Common myeloid progenitor, CD34-positive (primary cell): ENCODE measurements at regions of chr19 and their contacts with region 1.

Region 1: DNA sequence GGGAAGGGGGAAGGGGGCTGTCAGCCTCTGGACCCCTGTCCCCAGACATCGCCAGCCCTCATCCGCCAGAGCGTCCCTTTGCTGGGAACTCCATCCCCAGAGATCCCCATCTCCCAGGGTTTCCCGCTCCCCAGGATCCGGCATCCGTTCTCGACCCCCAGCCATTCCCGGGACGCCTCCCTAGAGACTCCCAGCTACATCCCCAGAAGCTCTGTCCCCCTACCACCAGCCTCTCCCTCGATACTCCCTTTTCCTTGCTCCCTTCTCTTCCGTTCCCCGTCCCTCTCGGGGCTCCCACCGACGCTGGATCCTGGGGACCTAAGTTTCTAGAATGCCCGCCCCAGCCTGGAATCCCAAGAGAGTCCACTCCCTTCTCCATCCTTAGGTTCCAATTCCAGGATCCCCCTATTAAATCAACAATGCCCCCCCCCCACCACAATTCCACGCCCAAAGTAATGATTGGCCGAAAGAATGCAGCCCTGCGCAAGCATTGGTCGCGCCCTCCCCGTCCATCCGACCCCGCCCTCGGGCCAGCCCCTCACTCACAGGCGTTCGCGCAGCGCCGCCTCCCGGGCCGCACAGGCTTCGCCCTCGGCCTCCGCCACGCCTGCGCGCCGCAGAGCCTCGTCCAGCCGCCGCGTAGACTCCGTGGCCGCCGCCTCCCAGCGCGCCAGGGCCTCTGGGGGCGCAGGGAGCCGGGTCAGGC is 3.2 kb downstream of the CCDC194 start:
- DNase-seq: peak; percentile 92 to 94 (median 93)
- H3K4me3 ChIP-seq: peak overlapping the region; percentile 32 to 84 (median 70)
- H3K27ac ChIP-seq: no peak overlapping the region
- H3K4me1 ChIP-seq: peaks cover 4 to 47% (median 38%) of the 10 kb centered on the region in 4 experiments
- H3K27me3 ChIP-seq: peaks cover 0 to 5% (median 0%) of the 10 kb centered on the region in 5 experiments

Region 2: DNA sequence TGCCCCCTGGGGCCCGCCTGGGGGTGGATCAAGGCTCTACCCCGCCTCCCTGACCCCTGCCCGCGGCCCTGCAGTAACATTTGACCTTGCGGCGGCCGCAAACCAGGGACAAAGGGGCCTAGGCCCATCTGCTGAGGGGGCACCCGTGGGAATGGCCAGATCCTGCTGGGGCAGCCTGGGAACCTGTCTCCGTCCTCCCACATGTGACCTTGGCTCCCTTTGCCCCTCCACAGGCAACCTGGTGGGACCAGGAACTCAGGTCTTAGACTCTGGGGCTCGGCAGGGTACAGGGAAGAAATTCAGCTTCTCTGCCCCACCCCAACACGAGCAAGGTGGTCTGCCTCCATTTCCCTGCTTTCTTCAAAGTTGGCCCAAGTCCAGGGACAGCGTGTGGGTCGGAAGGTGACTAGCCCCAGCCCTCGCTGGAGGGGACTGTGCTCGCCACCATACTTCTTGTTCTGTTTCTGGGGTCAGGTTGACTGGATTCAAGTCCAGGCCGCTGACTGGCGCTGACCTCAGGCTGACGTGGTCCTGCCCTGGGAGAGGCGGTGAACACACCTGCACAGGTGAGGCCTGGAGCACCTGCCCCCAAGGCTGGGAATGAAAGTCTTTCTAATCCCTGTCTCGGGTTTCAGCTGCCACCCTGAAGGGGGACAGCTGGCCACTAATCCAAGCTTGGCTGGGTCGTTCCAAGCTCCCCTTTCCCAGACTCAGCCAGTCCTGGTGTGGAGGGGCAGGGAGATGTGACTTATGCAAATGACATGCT is 142.6 kb before region 1 on chr19:
- CTCF ChIA-PET with region 1: no interaction called
- POLR2A ChIA-PET with region 1: no interaction called
- DNase-seq: no peak
- H3K4me3 ChIP-seq: no peak overlapping the region
- H3K27ac ChIP-seq: no peak overlapping the region
- H3K4me1 ChIP-seq: peaks cover 0 to 25% (median 24%) of the 10 kb centered on the region in 4 experiments
- H3K27me3 ChIP-seq: no peaks in the 10 kb centered on the region

Region 3: DNA sequence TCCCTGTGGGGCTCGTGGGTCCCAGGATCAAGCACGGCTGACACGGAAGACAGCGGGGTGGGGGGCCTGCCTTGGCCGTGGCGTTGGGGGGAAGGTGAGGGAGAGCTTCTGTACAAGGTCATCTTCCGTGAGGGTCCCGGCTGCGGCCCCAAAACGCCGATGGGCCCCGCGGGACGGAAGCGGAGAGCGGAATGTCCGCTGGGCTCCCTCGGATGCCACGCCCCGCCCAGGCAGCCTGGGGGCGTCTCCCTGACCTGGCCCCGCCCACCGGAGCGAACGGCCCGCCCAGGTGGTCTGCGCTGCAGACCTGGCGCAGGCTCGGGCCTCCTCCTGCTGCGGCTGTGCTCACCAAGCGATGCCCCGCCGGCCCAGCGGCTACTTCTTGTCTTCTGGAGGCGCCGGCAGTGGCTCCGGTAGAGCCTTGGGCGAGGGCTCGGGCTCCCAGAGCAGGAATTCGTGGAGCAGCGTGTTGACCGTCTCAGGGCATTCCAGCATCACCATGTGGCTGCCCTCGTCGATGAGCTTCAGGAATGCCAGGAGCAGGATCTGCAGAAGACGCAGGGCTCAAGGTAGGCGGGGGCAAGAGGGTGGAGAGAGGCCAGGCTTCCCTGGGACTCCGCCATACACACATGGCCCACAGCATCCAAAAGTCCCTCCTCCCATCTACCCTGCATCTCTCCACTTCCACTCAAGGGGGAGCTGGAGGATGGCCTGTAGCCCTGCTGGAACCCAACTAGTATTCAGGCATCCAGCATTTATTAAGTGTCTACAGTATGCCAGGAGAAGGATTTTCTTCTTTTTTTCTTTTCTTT is 98.3 kb before region 1 on chr19:
- CTCF ChIA-PET with region 1: interaction called, 18 read pairs
- POLR2A ChIA-PET with region 1: no interaction called
- DNase-seq: peak; percentile 77 to 88 (median 86)
- H3K4me3 ChIP-seq: peak overlapping the region; percentile 58 to 86 (median 70)
- H3K27ac ChIP-seq: peak overlapping the region in 1 of 2 experiments; percentile 75
- H3K4me1 ChIP-seq: peaks cover 0 to 16% (median 8%) of the 10 kb centered on the region in 4 experiments
- H3K27me3 ChIP-seq: no peaks in the 10 kb centered on the region

Region 4: GRCh38 chr19:17334414-17335409 is 56.1 kb before region 1 on chr19 and contains the start of gene ANO8:
- CTCF ChIA-PET with region 1: interaction called, 11 read pairs
- POLR2A ChIA-PET with region 1: interaction called, 3 read pairs
- DNase-seq: peak; percentile 98 to 99 (median 99)
- H3K4me3 ChIP-seq: peak within 1 kb of the TSS; percentile 52 to 90 (median 80)
- H3K27ac ChIP-seq: peak within 1 kb of the TSS in 1 of 2 experiments; percentile 38
- H3K4me1 ChIP-seq: peaks cover 0 to 47% (median 42%) of the 10 kb centered on the region in 4 experiments
- H3K27me3 ChIP-seq: peaks cover 0 to 7% (median 0%) of the 10 kb centered on the region in 5 experiments

Region 5: DNA sequence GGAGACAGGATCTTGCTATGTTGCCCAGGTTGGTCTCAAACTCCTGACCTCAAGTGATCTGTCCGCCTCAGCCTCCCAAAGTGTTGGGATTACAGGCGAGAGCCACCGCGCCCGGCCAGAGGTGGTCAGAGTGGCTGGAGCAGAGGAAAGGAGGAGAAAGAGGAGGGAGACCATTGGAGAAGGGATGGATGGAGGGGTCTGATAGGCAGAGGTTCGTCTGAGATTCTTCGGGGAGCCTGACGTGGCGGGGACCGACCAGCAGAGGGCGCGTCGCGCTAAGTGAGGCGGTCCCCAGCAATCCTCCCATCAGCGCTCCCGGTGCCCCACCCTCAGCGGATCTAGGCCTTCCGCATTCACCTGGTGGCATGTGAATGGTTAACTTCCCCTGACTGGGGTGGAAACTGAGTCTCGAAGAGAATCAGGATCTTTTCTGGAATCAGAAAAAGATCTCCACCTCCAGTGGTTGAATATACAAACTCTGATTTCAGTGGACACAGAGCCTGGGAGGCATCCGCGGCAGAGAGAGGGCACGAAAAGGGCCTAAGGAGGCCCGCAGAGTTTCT is 44.6 kb before region 1 on chr19:
- CTCF ChIA-PET with region 1: interaction called, 144 read pairs
- POLR2A ChIA-PET with region 1: no interaction called
- DNase-seq: peak; percentile 60 to 69 (median 62)
- H3K4me3 ChIP-seq: no peak overlapping the region
- H3K27ac ChIP-seq: no peak overlapping the region
- H3K4me1 ChIP-seq: peaks cover 0 to 29% (median 21%) of the 10 kb centered on the region in 4 experiments
- H3K27me3 ChIP-seq: no peaks in the 10 kb centered on the region

Region 6: DNA sequence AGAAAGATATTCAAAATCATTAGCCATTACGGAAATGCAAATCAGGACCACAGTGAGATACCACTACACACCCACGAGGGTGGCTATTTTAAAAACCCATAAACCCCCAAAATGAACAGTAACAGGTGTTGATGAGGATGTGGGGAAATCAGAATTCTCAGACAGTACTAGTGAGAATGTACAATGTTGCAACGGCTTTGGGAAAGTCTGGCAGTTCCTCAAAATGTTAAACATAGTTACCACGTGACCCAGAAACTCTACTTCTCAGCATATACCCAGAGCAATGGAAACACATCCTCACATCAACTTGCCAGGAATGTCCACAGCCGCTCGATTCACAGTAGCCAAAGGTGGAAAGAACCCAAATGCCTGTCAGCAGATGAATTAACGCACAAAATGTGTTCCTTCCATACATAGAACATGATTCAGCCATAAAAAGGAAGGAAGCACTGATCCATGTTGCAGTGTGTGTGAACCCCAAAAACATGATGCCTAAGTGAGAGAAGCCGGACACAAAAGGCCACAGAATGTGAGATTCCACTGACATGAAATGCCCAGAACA is 20.7 kb before region 1 on chr19:
- CTCF ChIA-PET with region 1: interaction called, 16 read pairs
- POLR2A ChIA-PET with region 1: no interaction called
- DNase-seq: peak; percentile 41 to 81 (median 73)
- H3K4me3 ChIP-seq: peak overlapping the region in 3 of 7 experiments; percentile 6 to 57 (median 38)
- H3K27ac ChIP-seq: no peak overlapping the region
- H3K4me1 ChIP-seq: peaks cover 6 to 14% (median 10%) of the 10 kb centered on the region in 4 experiments
- H3K27me3 ChIP-seq: no peaks in the 10 kb centered on the region

Region 7: GRCh38 chr19:17379221-17379631 is 11.6 kb before region 1 on chr19:
- CTCF ChIA-PET with region 1: interaction called, 10 read pairs
- POLR2A ChIA-PET with region 1: interaction called, 3 read pairs
- DNase-seq: peak in 2 of 3 donors; percentile 72 to 79
- H3K4me3 ChIP-seq: peak overlapping the region in 2 of 7 experiments; percentile 23 to 26
- H3K27ac ChIP-seq: no peak overlapping the region
- H3K4me1 ChIP-seq: peaks cover 7 to 45% (median 38%) of the 10 kb centered on the region in 4 experiments
- H3K27me3 ChIP-seq: no peaks in the 10 kb centered on the region

Region 8: DNA sequence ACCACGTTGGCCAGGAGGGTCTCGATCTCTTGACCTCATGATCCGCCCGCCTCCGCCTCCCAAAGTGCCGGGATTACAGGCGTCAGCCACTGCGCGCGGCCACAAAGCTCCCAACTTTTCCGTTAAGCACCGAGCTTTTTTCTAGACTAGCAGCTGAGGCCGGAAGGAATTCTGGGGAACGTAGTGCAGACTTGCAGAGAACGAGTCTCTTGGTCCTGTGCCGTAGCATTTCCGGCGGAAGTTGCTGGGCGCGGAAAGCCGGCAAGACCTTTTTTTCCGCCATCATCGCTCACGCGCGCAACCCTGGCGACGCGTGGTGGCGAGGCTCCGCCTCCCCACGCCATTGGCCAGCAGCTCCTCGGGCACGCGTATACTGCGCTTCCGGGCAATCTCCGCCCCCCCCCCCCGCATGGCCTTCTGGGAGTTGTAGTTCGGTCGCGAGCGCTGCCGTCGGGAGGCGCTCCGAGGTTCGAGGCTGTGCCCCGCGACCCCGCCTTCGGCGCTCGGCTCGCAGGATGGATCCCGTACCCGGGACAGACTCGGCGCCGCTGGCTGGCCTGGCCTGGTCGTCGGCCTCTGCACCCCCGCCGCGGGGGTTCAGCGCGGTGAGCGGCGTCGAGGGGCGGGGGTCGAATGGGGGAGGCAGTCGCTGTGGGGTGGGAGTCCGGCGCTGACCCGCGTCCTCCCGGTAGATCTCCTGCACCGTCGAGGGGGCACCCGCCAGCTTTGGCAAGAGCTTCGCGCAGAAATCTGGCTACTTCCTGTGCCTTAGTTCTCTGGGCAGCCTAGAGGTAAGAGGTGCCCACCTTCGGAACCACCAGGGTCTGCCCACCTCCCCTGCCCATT is 29.0 kb after region 1 on chr19 and contains the start of gene MVB12A:
- CTCF ChIA-PET with region 1: interaction called, 19 read pairs
- POLR2A ChIA-PET with region 1: no interaction called
- DNase-seq: peak; percentile 98 to 99 (median 99)
- H3K4me3 ChIP-seq: peak within 1 kb of the TSS; percentile 69 to 91 (median 79)
- H3K27ac ChIP-seq: peak within 1 kb of the TSS in 1 of 2 experiments; percentile 67
- H3K4me1 ChIP-seq: peaks cover 6 to 26% (median 17%) of the 10 kb centered on the region in 4 experiments
- H3K27me3 ChIP-seq: no peaks in the 10 kb centered on the region

Region 9: GRCh38 chr19:17565611-17566010 is 174.8 kb after region 1 on chr19:
- CTCF ChIA-PET with region 1: no interaction called
- POLR2A ChIA-PET with region 1: no interaction called
- DNase-seq: no peak
- H3K4me3 ChIP-seq: no peak overlapping the region
- H3K27ac ChIP-seq: no peak overlapping the region
- H3K4me1 ChIP-seq: peaks cover 0 to 12% (median 5%) of the 10 kb centered on the region in 4 experiments
- H3K27me3 ChIP-seq: no peaks in the 10 kb centered on the region